HEK293 (cell line): ENCODE measurements at regions of chr12 and their contacts with region 1.

Region 1: DNA sequence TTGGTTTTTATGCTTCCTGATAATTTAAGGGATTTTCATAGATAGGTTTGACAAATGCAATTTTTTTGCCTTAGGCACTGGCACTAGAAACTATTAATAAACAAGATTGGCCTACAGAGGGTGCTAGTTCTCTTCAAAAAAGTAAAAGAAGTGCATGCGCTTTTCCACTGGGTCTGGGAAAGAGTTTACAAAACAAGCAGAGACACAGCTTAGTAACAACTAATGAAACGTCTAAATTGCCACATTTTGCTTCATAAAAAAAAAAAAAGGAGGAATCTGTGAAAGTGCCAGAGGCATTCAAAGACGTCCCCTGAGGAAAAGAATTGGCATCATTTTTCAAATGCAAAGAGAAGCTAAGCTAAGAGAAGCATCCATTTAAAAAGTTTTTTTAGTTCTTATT is 58.3 kb upstream of the EEA1 start:
- H3K4me3 ChIP-seq: no peak overlapping the region
- H3K27ac ChIP-seq: no peak overlapping the region
- H3K4me1 ChIP-seq: no peaks in the 10 kb centered on the region; the same call in 1 of the 2 replicates
- CTCF ChIP-seq: peak; percentile 54; the same call in 1 of the 2 replicates

Region 2: DNA sequence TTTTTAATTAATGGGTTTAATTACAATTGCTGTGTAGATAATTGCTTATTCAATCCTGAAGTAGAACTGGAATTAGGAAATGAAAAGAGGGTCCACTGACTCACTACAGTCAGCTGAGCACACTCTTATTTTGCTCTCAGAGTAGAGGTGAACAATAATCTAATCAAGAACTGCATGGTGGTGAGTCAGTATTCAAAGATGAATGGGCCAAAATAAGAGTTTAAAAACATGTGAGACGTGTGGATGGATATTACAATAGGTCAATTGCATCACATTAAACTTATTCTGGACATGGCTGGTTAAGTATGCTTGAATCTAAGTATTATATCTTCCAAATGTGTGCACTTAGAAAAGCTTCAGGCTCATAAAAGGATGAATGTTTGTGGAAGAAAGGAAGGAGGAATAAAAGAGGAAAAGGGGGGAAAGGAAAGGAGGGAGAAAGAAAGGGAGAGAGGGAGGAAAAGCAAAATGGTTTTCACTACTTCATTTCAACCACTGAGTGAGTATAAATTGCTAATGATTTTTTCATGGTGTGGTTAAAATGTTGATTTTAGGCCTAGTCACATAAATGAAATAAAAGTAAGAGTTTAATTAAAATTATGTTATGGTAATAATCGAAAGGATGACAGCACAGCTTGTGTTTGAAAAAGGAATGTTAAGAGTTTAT is 31.2 kb before region 1 on chr12:
- CTCF ChIA-PET with region 1: no interaction called
- POLR2A ChIA-PET with region 1: no interaction called
- H3K4me3 ChIP-seq: no peak overlapping the region
- H3K27ac ChIP-seq: no peak overlapping the region
- H3K4me1 ChIP-seq: no peaks in the 10 kb centered on the region
- CTCF ChIP-seq: no peak

Region 3: GRCh38 chr12:93002293-93003054 is 15.1 kb after region 1 on chr12:
- CTCF ChIA-PET with region 1: interaction called, 12 read pairs
- POLR2A ChIA-PET with region 1: no interaction called
- H3K4me3 ChIP-seq: no peak overlapping the region
- H3K27ac ChIP-seq: no peak overlapping the region
- H3K4me1 ChIP-seq: peaks cover 12% of the 10 kb centered on the region
- CTCF ChIP-seq: no peak

Region 4: DNA sequence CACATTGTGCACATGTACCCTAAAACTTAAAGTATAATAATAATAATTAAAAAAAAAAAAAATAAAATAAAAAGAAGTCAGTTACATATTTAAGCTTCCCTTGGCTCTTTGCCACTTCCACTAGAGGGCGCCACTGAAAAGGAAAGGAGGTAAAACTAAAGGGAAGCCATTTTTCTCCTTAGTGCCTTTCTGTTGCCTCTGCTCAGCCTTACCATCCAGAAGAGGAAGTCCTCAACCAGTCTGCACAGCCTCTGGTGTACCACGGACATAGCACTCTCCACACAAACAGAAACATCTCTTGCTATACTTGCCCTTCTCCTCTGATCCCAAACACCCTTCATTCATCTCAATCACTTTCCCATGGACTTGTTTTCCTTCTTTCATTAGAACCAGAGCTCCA is 110.7 kb after region 1 on chr12:
- CTCF ChIA-PET with region 1: interaction called, 10 read pairs
- POLR2A ChIA-PET with region 1: no interaction called
- H3K4me3 ChIP-seq: no peak overlapping the region
- H3K27ac ChIP-seq: no peak overlapping the region
- H3K4me1 ChIP-seq: no peaks in the 10 kb centered on the region
- CTCF ChIP-seq: peak; percentile 31; the same call in 1 of the 2 replicates

Region 5: GRCh38 chr12:93378373-93379325 is 391.3 kb after region 1 on chr12:
- CTCF ChIA-PET with region 1: interaction called, 15 read pairs
- POLR2A ChIA-PET with region 1: no interaction called
- H3K4me3 ChIP-seq: peak overlapping the region; percentile 75
- H3K27ac ChIP-seq: peak overlapping the region; percentile 74
- H3K4me1 ChIP-seq: peaks cover 10% of the 10 kb centered on the region
- CTCF ChIP-seq: no peak

Region 6: DNA sequence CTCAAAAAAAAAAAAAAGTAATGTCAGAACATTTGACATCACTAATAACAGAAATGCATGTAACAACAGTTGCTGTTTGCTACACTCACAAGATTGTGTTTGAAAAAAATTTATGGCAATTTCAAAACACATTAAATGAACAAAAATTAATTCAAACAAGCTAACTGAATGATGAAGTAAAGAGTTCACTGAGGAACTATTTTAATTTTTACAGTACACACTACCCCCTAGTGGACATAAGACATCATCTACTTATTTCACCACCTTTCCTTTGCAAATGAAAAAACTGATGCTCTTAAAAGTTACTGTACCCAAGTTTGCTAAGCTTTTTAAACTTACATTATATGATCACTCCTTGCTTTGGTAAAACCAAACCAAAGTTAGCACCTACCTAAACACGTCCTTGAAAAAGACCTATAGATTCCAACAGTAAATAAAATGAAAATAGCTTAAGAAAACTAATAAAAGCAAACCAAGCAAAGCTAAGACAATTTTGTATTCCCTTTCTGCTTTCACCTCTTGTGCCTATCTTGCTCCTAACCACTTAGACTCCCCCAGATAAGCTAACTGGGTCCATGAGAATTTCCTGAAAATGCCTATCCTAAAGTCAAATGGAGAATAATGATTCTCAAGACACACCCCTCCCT is 432.1 kb after region 1 on chr12:
- CTCF ChIA-PET with region 1: interaction called, 28 read pairs
- POLR2A ChIA-PET with region 1: no interaction called
- H3K4me3 ChIP-seq: no peak overlapping the region
- H3K27ac ChIP-seq: no peak overlapping the region
- H3K4me1 ChIP-seq: peaks cover 19% of the 10 kb centered on the region; the same call in 1 of the 2 replicates
- CTCF ChIP-seq: no peak